MCF 10A (cell line): ENCODE measurements at regions of chr1 and their contacts with region 1.

Region 1: DNA sequence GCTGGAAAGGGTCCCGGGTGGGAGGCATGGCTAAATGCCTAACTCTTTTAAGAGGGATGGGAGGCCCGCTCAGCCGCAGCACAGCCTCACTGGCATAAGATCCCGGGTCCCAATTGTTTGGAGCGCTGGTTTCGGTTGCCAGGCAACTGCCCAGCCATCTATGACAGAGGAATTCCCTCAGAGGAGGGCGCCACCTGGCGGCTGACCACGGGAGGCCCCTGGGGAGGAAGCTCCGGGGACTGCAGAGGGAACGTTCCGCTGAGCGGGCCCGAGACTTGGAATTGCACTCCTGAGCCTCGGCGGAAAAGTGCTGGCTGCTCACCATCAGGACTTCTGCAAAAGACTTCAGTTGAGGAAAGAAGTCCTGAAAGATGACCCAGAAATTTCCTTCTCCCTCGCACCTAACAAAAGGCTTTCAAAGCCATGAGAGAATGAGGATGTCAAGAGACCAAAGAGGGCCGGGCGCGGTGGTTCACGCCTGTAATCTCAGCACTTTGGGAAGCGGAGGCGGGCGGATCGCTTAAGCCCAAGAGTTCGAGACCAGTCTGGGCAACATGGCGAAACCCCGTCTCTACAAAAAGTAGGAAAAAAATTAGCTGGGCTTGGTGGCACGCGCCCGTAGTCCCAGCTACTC is 1.1 kb upstream of the ELAPOR1 start:
- DNase-seq: peak; percentile 86
- H3K4me3 Mint-ChIP-seq: peak overlapping the region; percentile 42
- H3K27ac Mint-ChIP-seq: no peak overlapping the region
- H3K4me1 Mint-ChIP-seq: peaks cover 9% of the 10 kb centered on the region
- H3K27me3 Mint-ChIP-seq: peaks cover 29% of the 10 kb centered on the region
- CTCF ChIP-seq: peak; percentile 91

Region 2: DNA sequence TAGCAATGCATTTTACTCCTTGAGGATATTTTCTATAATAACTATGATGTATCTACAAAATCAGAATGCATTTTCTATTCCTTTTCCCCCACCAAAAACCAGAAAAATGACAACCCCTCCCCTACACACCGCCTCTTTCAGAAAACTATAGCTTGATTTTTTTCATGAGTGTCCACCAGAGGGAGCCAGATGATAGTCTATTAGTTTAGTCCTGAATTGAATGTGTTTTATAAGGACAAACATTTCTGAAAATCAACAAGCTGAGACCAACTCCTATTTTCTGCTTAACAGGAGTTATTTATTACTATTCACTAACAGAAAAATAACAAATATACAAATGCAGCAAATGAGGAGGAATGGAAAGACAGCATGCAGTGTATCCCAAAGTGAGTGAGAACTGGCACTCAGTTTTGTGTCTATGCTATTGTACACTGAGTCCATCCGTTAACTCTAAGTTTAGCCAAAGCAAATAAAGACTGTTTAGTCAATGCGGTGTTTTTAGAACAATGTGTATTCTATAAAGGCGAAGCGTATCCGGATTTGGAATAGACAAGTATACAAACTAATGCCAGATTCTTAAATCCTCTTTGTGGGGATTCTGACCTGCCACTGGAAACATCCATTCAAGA is 1330.4 kb before region 1 on chr1:
- CTCF ChIA-PET with region 1: no interaction called
- POLR2A ChIA-PET with region 1: no interaction called
- intact Hi-C with region 1: loop called (anchors 10 kb)
- DNase-seq: peak; percentile 68
- H3K4me3 Mint-ChIP-seq: no peak overlapping the region
- H3K27ac Mint-ChIP-seq: no peak overlapping the region
- H3K4me1 Mint-ChIP-seq: no peaks in the 10 kb centered on the region
- H3K27me3 Mint-ChIP-seq: no peaks in the 10 kb centered on the region
- CTCF ChIP-seq: peak; percentile 60

Region 3: DNA sequence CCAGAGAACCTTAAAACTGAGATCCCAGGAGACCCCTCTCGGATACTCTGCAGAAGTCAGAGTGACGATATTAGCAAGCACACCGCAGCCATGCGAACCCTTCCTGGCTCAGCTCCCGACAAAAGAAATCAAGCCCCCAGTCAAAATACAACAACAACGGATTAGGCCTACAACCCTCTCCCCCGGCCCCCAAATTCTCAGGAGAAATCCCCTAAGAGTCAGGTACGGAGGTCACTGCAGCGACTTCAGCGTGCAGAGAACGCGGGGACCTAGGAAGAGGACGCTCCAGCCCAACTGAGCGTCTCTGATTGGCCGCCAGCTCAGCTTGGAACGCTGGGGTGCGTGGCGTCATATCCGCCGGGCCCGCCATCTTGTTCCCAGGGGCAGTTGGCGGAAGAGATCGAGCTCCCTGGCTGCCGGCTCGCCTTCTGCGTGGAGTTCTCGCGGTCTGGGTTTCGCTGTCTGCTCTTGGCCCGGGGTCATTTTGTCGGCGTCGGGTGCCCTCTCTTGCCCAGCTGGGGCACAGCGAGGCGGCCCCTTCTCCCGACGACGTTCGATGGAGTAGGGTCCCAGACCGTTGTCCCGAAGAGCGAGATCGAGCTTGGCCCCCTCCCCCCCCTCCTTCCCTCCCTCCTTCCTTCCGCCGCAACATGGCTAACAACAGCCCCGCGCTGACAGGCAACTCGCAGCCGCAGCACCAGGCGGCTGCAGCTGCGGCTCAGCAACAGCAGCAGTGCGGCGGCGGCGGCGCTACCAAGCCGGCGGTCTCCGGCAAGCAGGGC is 420.6 kb before region 1 on chr1 and contains the start of gene PRPF38B:
- CTCF ChIA-PET with region 1: interaction called, 3 read pairs
- POLR2A ChIA-PET with region 1: no interaction called
- intact Hi-C with region 1: loop called (anchors 2 kb)
- DNase-seq: peak; percentile 93
- H3K4me3 Mint-ChIP-seq: peak within 1 kb of the TSS; percentile 100
- H3K27ac Mint-ChIP-seq: peak within 1 kb of the TSS; percentile 99
- H3K4me1 Mint-ChIP-seq: peaks cover 26% of the 10 kb centered on the region
- H3K27me3 Mint-ChIP-seq: no peaks in the 10 kb centered on the region
- CTCF ChIP-seq: no peak
- total RNA-seq, gene PRPF38B: 65.1 and 65.3 TPM in 2 replicates

Region 4: GRCh38 chr1:108963052-108963686 is 149.6 kb before region 1 on chr1 and contains the start of gene CLCC1:
- CTCF ChIA-PET with region 1: interaction called, 19 read pairs
- POLR2A ChIA-PET with region 1: interaction called, 3 read pairs
- intact Hi-C with region 1: loop called (anchors 2 kb)
- DNase-seq: peak; percentile 94
- H3K4me3 Mint-ChIP-seq: peak within 1 kb of the TSS; percentile 86
- H3K27ac Mint-ChIP-seq: peak within 1 kb of the TSS; percentile 83
- H3K4me1 Mint-ChIP-seq: peaks cover 18% of the 10 kb centered on the region
- H3K27me3 Mint-ChIP-seq: no peaks in the 10 kb centered on the region
- CTCF ChIP-seq: no peak
- total RNA-seq, gene CLCC1: 36.6 and 46.3 TPM in 2 replicates

Region 5: DNA sequence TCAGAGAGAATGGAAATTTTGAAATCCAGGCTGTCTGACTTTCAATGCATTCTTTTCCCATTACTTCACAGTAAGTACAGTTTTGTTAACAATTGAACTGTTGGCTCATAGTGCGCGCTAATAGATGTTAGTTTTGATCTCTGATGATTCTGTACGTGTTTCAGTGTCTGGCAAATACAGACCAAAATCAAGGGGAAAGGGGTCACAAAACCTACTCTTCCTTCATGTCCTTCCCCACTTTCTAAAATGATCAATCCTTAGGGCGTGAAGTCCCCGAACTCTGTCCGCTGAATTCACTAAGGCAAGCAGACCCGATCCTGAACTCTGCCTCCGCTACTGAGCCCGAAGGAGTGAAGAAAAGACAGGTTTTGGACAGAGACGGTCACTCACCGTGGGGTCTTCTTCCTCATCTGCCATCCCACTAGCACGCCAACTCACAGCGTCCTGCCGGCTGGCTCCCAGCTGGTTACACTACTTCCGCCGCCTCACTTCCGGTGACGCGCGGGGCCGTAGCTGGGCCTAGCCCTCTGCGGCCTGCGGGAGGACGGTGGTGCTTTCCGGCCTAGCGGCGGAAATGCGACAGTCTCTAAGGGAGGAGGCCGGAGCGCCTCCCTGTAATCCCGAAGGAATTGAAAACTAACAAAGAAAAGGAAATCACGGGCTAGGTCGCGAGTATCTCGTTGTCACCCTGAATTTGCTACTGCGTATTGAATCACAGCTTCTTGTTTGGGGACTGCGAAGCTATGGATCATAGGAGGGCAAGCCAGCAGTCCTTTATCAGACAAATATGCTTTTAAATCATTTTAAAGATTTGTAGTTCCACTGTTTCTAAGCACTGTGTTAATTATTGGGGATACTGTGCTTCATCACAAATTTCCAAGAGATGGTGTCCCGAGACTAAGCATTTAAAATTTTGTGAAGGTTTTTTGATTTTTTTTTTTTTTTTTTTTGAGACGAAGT is 37.0 kb before region 1 on chr1 and contains the start of gene TAF13:
- CTCF ChIA-PET with region 1: interaction called, 10 read pairs
- POLR2A ChIA-PET with region 1: interaction called, 3 read pairs
- intact Hi-C with region 1: no loop called
- DNase-seq: peak; percentile 93
- H3K4me3 Mint-ChIP-seq: peak within 1 kb of the TSS; percentile 99
- H3K27ac Mint-ChIP-seq: peak within 1 kb of the TSS; percentile 100
- H3K4me1 Mint-ChIP-seq: peaks cover 5% of the 10 kb centered on the region
- H3K27me3 Mint-ChIP-seq: no peaks in the 10 kb centered on the region
- CTCF ChIP-seq: no peak
- total RNA-seq, gene TAF13: 76.7 and 88.2 TPM in 2 replicates

Region 6: DNA sequence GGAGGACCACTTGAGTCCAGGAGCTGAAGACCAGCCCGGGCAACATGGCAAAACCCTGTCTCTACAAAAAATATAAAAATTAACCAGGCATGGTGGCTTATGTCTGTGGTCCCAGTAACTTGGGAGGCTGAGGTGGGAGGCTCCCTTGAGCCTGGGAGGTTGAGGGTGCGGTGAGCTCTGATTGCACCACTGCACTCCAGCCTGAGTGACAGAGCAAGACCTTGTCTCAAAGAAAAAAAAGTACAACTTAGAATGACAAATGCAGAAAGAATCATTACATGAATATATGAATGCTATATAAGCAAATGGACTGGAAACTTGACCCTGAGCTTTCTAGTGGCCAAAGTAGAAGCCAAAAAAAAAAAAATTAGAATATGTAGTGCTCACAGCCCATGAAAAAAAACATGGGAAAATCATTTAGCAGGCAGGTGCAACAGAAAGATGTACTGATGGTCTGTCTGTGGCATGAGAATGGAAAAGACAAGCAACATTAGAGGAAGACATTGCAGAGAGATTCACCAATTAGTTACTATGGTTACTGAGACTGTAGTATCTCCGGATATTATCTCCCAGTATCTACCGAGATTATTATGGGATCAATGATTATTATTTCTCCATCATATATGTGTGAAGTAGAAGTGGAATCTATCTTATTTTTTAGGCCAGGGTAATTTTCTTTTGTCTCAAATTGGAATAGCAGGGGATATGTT is 20.4 kb after region 1 on chr1:
- CTCF ChIA-PET with region 1: interaction called, 14 read pairs
- POLR2A ChIA-PET with region 1: interaction called, 3 read pairs
- intact Hi-C with region 1: no loop called
- DNase-seq: no peak
- H3K4me3 Mint-ChIP-seq: no peak overlapping the region
- H3K27ac Mint-ChIP-seq: no peak overlapping the region
- H3K4me1 Mint-ChIP-seq: peaks cover 6% of the 10 kb centered on the region
- H3K27me3 Mint-ChIP-seq: no peaks in the 10 kb centered on the region
- CTCF ChIP-seq: no peak

Region 7: DNA sequence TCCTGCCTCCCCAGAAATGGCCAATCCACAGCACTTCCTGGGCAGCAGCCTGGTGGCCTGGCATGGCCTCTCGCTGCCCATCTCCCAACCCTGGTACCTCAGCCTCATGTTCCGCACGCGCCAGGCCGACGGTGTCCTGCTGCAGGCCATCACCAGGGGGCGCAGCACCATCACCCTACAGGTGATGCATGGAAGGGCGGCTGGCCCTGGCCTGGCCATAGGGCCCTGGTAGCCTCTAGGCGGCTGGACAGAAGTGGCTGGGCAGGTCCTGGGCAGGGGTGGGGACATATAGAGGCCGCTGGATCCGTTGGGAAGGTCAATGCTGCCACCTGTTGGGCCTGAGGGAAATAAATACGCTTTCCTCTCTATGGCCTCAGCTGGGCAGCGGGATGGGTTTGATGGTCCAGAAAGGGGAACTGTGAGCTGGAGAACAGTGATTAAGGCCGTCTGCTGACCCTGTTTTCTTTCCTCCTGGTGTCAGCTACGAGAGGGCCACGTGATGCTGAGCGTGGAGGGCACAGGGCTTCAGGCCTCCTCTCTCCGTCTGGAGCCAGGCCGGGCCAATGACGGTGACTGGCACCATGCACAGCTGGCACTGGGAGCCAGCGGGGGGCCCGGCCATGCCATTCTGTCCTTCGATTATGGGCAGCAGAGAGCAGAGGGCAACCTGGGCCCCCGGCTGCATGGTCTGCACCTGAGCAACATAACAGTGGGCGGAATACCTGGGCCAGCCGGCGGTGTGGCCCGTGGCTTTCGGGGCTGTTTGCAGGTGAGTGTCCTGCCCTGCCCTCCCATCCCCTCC is 151.0 kb after region 1 on chr1:
- CTCF ChIA-PET with region 1: no interaction called
- POLR2A ChIA-PET with region 1: no interaction called
- intact Hi-C with region 1: loop called (anchors 1 kb)
- DNase-seq: peak; percentile 94
- H3K4me3 Mint-ChIP-seq: peak overlapping the region; percentile 47
- H3K27ac Mint-ChIP-seq: no peak overlapping the region
- H3K4me1 Mint-ChIP-seq: peaks cover 24% of the 10 kb centered on the region
- H3K27me3 Mint-ChIP-seq: no peaks in the 10 kb centered on the region
- CTCF ChIP-seq: peak; percentile 99